CD4-positive, alpha-beta T cell (primary cell): ENCODE measurements at regions of chr12 and their contacts with region 1.

Region 1: GRCh38 chr12:92784795-92785562 is 82.2 kb downstream of the PLEKHG7 start:
- DNase-seq: peak in 9 of 14 experiments; percentile 2 to 79 (median 15)
- ATAC-seq: peak; percentile 100
- H3K4me3 ChIP-seq: no peak overlapping the region
- H3K4me3 Mint-ChIP-seq: no peak overlapping the region
- H3K27ac ChIP-seq: no peak overlapping the region
- H3K27ac Mint-ChIP-seq: no peak overlapping the region
- H3K4me1 ChIP-seq: no peaks in the 10 kb centered on the region
- H3K4me1 Mint-ChIP-seq: no peaks in the 10 kb centered on the region
- H3K27me3 ChIP-seq: no peaks in the 10 kb centered on the region
- H3K27me3 Mint-ChIP-seq: no peaks in the 10 kb centered on the region
- CTCF ChIP-seq: peak; percentile 49

Region 2: GRCh38 chr12:92745856-92746540 is 39.0 kb before region 1 on chr12:
- CTCF ChIA-PET with region 1: no interaction called
- POLR2A ChIA-PET with region 1: no interaction called
- intact Hi-C with region 1: loop called in 1 of 2 experiments (anchors 1 kb)
- DNase-seq: no peak
- ATAC-seq: no peak
- H3K4me3 ChIP-seq: no peak overlapping the region
- H3K4me3 Mint-ChIP-seq: no peak overlapping the region
- H3K27ac ChIP-seq: no peak overlapping the region
- H3K27ac Mint-ChIP-seq: no peak overlapping the region
- H3K4me1 ChIP-seq: no peaks in the 10 kb centered on the region
- H3K4me1 Mint-ChIP-seq: peaks cover 11% of the 10 kb centered on the region
- H3K27me3 ChIP-seq: no peaks in the 10 kb centered on the region
- H3K27me3 Mint-ChIP-seq: peaks cover 4% of the 10 kb centered on the region
- CTCF ChIP-seq: no peak

Region 3: GRCh38 chr12:92827836-92828431 is 43.0 kb after region 1 on chr12:
- CTCF ChIA-PET with region 1: no interaction called
- POLR2A ChIA-PET with region 1: no interaction called
- intact Hi-C with region 1: no loop called
- DNase-seq: peak in 12 of 14 experiments; percentile 10 to 67 (median 32)
- ATAC-seq: peak; percentile 79
- H3K4me3 ChIP-seq: no peak overlapping the region
- H3K4me3 Mint-ChIP-seq: no peak overlapping the region
- H3K27ac ChIP-seq: no peak overlapping the region
- H3K27ac Mint-ChIP-seq: no peak overlapping the region
- H3K4me1 ChIP-seq: no peaks in the 10 kb centered on the region
- H3K4me1 Mint-ChIP-seq: peaks cover 11% of the 10 kb centered on the region
- H3K27me3 ChIP-seq: no peaks in the 10 kb centered on the region
- H3K27me3 Mint-ChIP-seq: no peaks in the 10 kb centered on the region
- CTCF ChIP-seq: peak; percentile 65

Region 4: GRCh38 chr12:92943482-92944250 is 158.7 kb after region 1 on chr12:
- CTCF ChIA-PET with region 1: interaction called, 5 read pairs
- POLR2A ChIA-PET with region 1: no interaction called
- intact Hi-C with region 1: loop called in 1 of 2 experiments (anchors 5 kb)
- DNase-seq: no peak
- ATAC-seq: no peak
- H3K4me3 ChIP-seq: no peak overlapping the region
- H3K4me3 Mint-ChIP-seq: no peak overlapping the region
- H3K27ac ChIP-seq: no peak overlapping the region
- H3K27ac Mint-ChIP-seq: no peak overlapping the region
- H3K4me1 ChIP-seq: no peaks in the 10 kb centered on the region
- H3K4me1 Mint-ChIP-seq: no peaks in the 10 kb centered on the region
- H3K27me3 ChIP-seq: no peaks in the 10 kb centered on the region
- H3K27me3 Mint-ChIP-seq: no peaks in the 10 kb centered on the region
- CTCF ChIP-seq: no peak

Region 5: GRCh38 chr12:93098077-93098476 is 313.1 kb after region 1 on chr12:
- CTCF ChIA-PET with region 1: no interaction called
- POLR2A ChIA-PET with region 1: no interaction called
- intact Hi-C with region 1: loop called in 1 of 2 experiments (anchors 5 kb)
- DNase-seq: peak; percentile 32 to 81 (median 60)
- ATAC-seq: peak; percentile 84
- H3K4me3 ChIP-seq: no peak overlapping the region
- H3K4me3 Mint-ChIP-seq: no peak overlapping the region
- H3K27ac ChIP-seq: no peak overlapping the region
- H3K27ac Mint-ChIP-seq: no peak overlapping the region
- H3K4me1 ChIP-seq: peaks cover 3% of the 10 kb centered on the region
- H3K4me1 Mint-ChIP-seq: peaks cover 5% of the 10 kb centered on the region
- H3K27me3 ChIP-seq: no peaks in the 10 kb centered on the region
- H3K27me3 Mint-ChIP-seq: peaks cover 6% of the 10 kb centered on the region
- CTCF ChIP-seq: peak; percentile 61

Region 6: DNA sequence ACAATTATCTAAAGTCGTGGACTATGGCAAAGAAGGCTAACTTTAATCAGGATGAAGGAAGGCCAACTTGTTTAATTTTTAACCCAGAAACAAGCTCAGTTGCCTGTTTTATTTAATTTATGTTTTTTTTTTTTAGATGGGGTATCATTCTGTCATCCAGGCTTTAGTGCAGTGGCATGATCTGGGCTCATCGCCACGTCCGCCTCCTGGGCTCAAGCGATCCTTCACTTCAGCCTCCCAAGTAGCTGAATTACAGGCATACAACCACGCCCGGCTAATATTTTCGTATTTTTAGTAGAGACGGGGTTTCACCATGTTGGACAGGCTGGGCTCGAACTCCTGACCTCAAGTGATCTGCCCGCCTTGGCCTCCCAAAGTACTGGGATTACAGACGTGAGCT is 612.4 kb after region 1 on chr12:
- CTCF ChIA-PET with region 1: no interaction called
- POLR2A ChIA-PET with region 1: no interaction called
- intact Hi-C with region 1: loop called (anchors 1 to 2 kb)
- DNase-seq: no peak
- ATAC-seq: no peak
- H3K4me3 ChIP-seq: no peak overlapping the region
- H3K4me3 Mint-ChIP-seq: no peak overlapping the region
- H3K27ac ChIP-seq: no peak overlapping the region
- H3K27ac Mint-ChIP-seq: no peak overlapping the region
- H3K4me1 ChIP-seq: no peaks in the 10 kb centered on the region
- H3K4me1 Mint-ChIP-seq: peaks cover 1% of the 10 kb centered on the region
- H3K27me3 ChIP-seq: no peaks in the 10 kb centered on the region
- H3K27me3 Mint-ChIP-seq: no peaks in the 10 kb centered on the region
- CTCF ChIP-seq: no peak

Region 7: GRCh38 chr12:94101738-94102660 is 1317.0 kb after region 1 on chr12:
- CTCF ChIA-PET with region 1: no interaction called
- POLR2A ChIA-PET with region 1: no interaction called
- intact Hi-C with region 1: loop called (anchors 1 to 5 kb)
- DNase-seq: peak; percentile 73 to 92 (median 79)
- ATAC-seq: peak; percentile 90
- H3K4me3 ChIP-seq: peak overlapping the region; percentile 86
- H3K4me3 Mint-ChIP-seq: peak overlapping the region; percentile 90
- H3K27ac ChIP-seq: peak overlapping the region in 1 of 2 donors; percentile 29
- H3K27ac Mint-ChIP-seq: peak overlapping the region; percentile 43
- H3K4me1 ChIP-seq: peaks cover 19% of the 10 kb centered on the region
- H3K4me1 Mint-ChIP-seq: peaks cover 5% of the 10 kb centered on the region
- H3K27me3 ChIP-seq: no peaks in the 10 kb centered on the region
- H3K27me3 Mint-ChIP-seq: peaks cover 15% of the 10 kb centered on the region
- CTCF ChIP-seq: peak; percentile 70